IMR-90 (cell line): ENCODE measurements at regions of chr6 and their contacts with region 1.

Region 1: DNA sequence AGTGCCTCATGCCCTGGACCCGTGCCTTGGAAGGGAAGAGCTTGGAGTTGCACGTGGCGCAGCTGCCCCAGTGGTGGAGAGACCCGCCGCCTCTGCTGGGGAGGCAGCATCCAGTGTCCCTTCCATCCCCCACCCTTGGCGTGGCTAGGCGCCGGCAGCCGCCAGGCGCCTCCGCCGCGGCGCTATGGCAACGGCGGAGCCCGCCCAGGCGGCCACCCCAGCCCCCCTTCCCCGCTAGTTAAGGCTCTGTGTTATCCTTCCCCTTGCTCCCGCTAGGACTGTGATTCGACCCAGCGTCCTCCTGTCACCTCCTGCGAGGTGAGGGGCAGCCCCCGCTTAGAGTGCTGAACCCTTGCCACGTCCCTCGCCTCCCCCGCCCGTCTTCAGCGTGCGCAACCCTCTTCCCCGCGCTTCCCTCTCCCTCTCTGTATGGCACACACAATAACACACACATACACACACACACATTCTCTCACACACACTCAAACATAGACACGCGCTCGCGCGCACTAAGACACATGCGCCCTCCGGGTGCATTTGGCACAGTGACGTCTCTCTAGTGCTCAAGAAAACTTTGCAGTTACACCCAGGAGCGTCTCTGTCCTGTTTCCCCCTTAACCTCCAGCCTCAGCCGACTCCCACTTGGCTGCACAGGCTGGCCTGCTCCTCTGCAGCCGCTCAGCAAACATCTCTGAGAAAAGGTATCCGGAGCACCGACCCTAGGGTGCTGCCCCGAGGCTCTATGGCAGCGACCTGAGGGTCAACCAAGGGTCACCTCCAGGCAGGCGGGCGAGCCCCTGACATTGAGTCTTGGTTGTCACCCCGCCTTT is 8.5 kb downstream of the GRIK2 start:
- DNase-seq: peak; percentile 46
- ATAC-seq: peak; percentile 65
- H3K4me3 ChIP-seq: peak overlapping the region; percentile 54
- H3K27ac ChIP-seq: peak overlapping the region; percentile 20; the same call in 1 of the 2 replicates
- H3K4me1 ChIP-seq: 0 out of 2 replicates have a peak, but pooled peaks cover 8% of the 10 kb centered on the region
- H3K27me3 ChIP-seq: no peaks in the 10 kb centered on the region; the same call in 1 of the 2 replicates
- CTCF ChIP-seq: no peak
- POLR2A ChIP-seq: no peak
- RAD21 ChIP-seq: no peak

Region 2: GRCh38 chr6:101439790-101440189 is 37.8 kb after region 1 on chr6:
- CTCF ChIA-PET with region 1: no interaction called
- POLR2A ChIA-PET with region 1: no interaction called
- dilution Hi-C with region 1: no loop called
- in situ Hi-C with region 1: no loop called
- intact Hi-C with region 1: loop called (anchors 5 kb)
- DNase-seq: peak; percentile 65
- ATAC-seq: peak; percentile 56
- H3K4me3 ChIP-seq: no peak overlapping the region
- H3K27ac ChIP-seq: no peak overlapping the region
- H3K4me1 ChIP-seq: no peaks in the 10 kb centered on the region; the same call in 1 of the 2 replicates
- H3K27me3 ChIP-seq: no peaks in the 10 kb centered on the region
- CTCF ChIP-seq: no peak
- POLR2A ChIP-seq: no peak
- RAD21 ChIP-seq: no peak

Region 3: GRCh38 chr6:101539536-101540240 is 137.7 kb after region 1 on chr6:
- CTCF ChIA-PET with region 1: no interaction called
- POLR2A ChIA-PET with region 1: no interaction called
- dilution Hi-C with region 1: no loop called
- in situ Hi-C with region 1: no loop called
- intact Hi-C with region 1: loop called (anchors 2 kb)
- DNase-seq: peak; percentile 82
- ATAC-seq: peak; percentile 68
- H3K4me3 ChIP-seq: no peak overlapping the region
- H3K27ac ChIP-seq: no peak overlapping the region; the same call in 1 of the 2 replicates
- H3K4me1 ChIP-seq: peaks cover 2% of the 10 kb centered on the region
- H3K27me3 ChIP-seq: no peaks in the 10 kb centered on the region
- CTCF ChIP-seq: no peak
- POLR2A ChIP-seq: no peak
- RAD21 ChIP-seq: no peak

Region 4: GRCh38 chr6:101926149-101926925 is 524.3 kb after region 1 on chr6:
- CTCF ChIA-PET with region 1: no interaction called
- POLR2A ChIA-PET with region 1: no interaction called
- dilution Hi-C with region 1: no loop called
- in situ Hi-C with region 1: no loop called
- intact Hi-C with region 1: no loop called
- DNase-seq: peak; percentile 25
- ATAC-seq: no peak
- H3K4me3 ChIP-seq: no peak overlapping the region
- H3K27ac ChIP-seq: no peak overlapping the region
- H3K4me1 ChIP-seq: no peaks in the 10 kb centered on the region
- H3K27me3 ChIP-seq: no peaks in the 10 kb centered on the region
- CTCF ChIP-seq: no peak
- POLR2A ChIP-seq: no peak
- RAD21 ChIP-seq: no peak